G401 (cell line): ENCODE measurements at regions of chr13 and their contacts with region 1.

Region 1: GRCh38 chr13:43493496-43494000 is 293.2 kb downstream of the ENOX1 start:
- DNase-seq: no peak

Region 2: DNA sequence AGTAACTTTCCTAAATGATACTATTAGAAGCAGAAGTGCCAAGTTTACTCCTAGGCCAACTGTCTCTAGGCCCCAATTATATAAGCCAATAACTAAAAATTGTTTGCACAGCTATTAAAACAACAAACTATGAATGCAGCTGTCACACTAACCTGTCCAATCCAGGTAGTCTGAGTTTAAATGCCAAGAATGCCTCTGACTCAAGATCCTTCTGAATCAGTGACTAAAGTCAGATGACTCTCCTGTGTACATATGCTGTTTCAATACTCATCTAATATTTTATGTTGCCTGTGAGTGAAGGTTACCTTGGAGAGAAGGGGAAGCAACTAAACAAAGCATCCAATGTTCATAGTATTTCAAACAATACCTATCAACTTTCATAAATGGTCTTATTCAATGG is 36.2 kb after region 1 on chr13:
- in situ Hi-C with region 1: loop called (anchors 5 kb)
- DNase-seq: no peak

Region 3: GRCh38 chr13:43567608-43568007 is 74.1 kb after region 1 on chr13:
- in situ Hi-C with region 1: no loop called
- DNase-seq: no peak